Activated CD4-positive, alpha-beta T cell treated with anti-CD3 and anti-CD28 coated beads for 36 hours (primary cell): ENCODE measurements at regions of chr19 and their contacts with region 1.

Region 1: DNA sequence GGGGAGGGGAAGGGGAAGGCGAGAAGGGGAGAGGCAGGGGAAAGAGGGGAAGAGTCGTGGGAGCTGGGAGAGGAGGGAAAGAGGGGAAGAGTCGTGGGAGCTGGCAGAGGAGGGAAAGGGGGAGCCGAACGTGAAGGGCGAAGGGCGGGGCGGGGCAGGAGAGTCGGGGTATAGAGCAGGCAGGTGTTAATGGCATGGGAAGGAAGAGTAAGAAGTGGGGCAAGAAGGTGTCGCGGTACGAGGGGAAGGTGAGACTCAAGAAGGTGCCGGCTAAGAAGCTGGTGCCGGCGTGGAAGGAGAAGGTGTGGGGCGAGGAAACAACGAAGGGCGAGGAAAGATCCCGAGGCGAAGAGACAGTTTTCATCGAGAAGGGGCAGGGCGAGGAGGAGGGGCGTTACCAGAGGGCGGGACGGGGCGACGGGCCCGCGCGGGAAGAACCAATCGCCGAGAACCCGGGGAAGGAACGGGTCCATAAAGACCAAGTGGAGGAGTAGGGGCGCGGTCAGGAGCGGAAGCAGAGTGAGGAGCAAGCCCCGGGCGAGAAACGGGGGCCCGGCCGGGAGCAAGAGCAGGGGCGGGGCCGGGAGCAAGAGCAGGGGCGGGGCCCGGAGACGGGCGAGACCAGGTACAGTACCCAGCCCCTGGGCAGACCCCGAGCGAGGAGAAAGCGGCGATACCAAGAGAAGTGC is 463 bp downstream of the CATSPERG start:
- DNase-seq: peak; percentile 98
- ATAC-seq: peak; percentile 75
- H3K4me3 Mint-ChIP-seq: peak overlapping the region; percentile 82
- H3K27ac Mint-ChIP-seq: peak overlapping the region; percentile 98
- H3K4me1 Mint-ChIP-seq: peaks cover 12% of the 10 kb centered on the region
- H3K27me3 Mint-ChIP-seq: no peaks in the 10 kb centered on the region

Region 2: GRCh38 chr19:37906869-37907734 is 429.0 kb before region 1 on chr19 and contains the start of gene SIPA1L3:
- CTCF ChIA-PET with region 1: interaction called, 3 read pairs
- POLR2A ChIA-PET with region 1: interaction called, 3 read pairs
- intact Hi-C with region 1: loop called (anchors 1 kb)
- DNase-seq: peak; percentile 97
- ATAC-seq: peak; percentile 98
- H3K4me3 Mint-ChIP-seq: peak within 1 kb of the TSS; percentile 73
- H3K27ac Mint-ChIP-seq: peak within 1 kb of the TSS; percentile 74
- H3K4me1 Mint-ChIP-seq: peaks cover 20% of the 10 kb centered on the region
- H3K27me3 Mint-ChIP-seq: no peaks in the 10 kb centered on the region
- total RNA-seq, gene SIPA1L3: 10.5 to 18.3 TPM

Region 3: DNA sequence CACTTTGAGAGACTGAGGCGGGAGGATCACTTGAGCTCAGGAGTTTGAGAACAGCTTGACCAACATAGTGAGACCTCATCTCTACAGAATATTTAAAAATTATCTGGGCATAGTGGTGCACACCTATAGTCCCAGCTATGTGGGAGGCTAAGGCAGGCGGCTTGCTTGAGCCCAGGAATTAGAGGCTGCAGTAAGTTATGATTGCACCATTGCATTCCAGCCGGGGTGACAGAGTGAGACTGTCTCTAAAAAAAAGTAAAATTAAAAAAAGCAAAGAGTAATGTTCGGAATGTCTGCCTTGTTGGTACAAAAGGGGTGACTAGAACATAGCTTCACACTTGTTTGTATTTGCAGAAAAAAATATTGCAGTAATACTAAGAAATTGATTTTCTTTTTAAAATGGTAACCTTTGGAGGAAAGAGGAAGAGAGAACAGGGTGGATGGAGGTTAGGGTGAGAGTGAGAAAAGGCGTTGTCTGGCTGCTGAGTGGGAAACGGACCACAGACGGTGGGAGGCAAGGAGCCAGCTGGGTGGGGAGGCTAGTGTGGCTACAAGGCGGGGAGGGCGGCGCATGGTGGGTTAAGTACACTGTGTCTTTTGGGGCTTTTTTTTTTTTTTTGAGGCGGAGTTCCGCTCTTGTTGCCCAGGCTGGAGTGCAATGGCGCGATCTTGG is 90.1 kb before region 1 on chr19:
- CTCF ChIA-PET with region 1: interaction called, 13 read pairs
- POLR2A ChIA-PET with region 1: no interaction called
- intact Hi-C with region 1: loop called (anchors 1 kb)
- DNase-seq: no peak
- ATAC-seq: no peak
- H3K4me3 Mint-ChIP-seq: no peak overlapping the region
- H3K27ac Mint-ChIP-seq: no peak overlapping the region
- H3K4me1 Mint-ChIP-seq: peaks cover 3% of the 10 kb centered on the region
- H3K27me3 Mint-ChIP-seq: peaks cover 2% of the 10 kb centered on the region

Region 4: DNA sequence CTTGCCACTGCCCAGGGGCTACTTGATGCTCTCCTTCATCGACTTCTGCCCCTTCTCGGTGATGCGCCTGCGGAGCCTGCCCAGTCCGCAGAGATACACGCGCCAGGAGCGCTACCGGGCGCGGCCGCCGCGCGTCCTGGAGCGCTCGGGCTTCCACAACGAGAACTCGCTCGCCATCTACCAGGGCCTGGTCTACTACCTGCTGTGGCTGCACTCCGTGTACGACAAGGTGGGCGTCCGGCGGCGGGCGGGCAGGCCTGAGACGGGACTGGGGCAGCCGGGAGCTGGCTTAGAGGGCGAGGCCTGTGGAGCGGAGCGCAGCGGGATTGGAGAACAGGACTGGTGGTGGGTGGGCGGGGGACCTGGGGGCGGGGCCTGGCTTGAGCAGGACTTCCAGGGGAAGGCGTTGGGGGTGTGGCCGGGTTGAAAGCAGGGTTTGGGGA is 25.6 kb after region 1 on chr19:
- CTCF ChIA-PET with region 1: no interaction called
- POLR2A ChIA-PET with region 1: no interaction called
- intact Hi-C with region 1: loop called (anchors 1 kb)
- DNase-seq: peak; percentile 87
- ATAC-seq: peak; percentile 78
- H3K4me3 Mint-ChIP-seq: peak overlapping the region; percentile 76
- H3K27ac Mint-ChIP-seq: no peak overlapping the region
- H3K4me1 Mint-ChIP-seq: peaks cover 9% of the 10 kb centered on the region
- H3K27me3 Mint-ChIP-seq: peaks cover 22% of the 10 kb centered on the region

Region 5: DNA sequence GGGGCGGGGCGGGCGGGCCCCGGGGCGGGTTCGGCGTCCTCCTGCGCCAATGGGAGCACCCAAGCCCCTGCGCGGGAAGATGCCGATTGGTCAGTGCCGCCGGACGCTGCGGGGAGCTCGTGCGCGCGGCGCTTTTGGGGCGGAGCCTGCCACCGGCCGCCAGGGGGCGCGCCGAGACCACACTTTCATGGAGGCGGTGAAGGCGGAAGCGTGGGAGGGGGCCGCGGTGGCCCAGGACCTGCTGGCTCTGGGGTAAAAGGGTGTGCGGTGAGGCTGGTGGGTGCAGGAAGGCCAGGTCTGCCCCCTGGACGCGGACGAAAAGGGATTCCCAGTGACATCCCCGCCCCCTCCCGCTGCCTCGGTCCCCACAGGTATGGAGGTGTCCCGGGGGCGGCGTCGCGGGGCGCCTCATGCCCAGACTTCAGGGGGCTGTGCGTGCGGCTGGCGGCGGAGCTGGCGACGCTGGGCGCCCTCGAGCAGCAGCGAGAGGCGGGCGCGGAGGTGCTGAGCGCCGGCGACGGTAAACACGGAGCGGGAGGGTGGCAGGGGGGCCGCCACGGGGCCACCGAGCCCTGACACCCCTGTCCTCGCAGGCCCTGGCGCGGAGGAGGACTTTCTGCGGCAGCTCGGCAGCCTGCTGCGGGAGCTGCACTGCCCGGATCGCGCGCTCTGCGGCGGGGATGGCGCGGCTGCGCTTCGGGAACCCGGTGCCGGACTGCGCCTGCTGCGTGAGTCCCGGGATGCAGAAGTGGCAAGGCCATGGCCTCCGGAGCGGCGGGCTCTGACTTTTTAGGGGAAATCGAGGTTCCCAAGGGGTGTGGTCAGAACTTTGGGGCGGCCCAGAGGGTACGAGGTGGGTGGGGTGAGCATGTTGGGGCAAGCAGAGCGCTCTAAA is 67.1 kb after region 1 on chr19 and contains the start of gene FAM98C:
- CTCF ChIA-PET with region 1: interaction called, 3 read pairs
- POLR2A ChIA-PET with region 1: no interaction called
- intact Hi-C with region 1: loop called in 1 of 2 experiments (anchors 1 kb)
- DNase-seq: peak; percentile 99
- ATAC-seq: peak; percentile 99
- H3K4me3 Mint-ChIP-seq: peak within 1 kb of the TSS; percentile 84
- H3K27ac Mint-ChIP-seq: peak within 1 kb of the TSS; percentile 85
- H3K4me1 Mint-ChIP-seq: peaks cover 16% of the 10 kb centered on the region
- H3K27me3 Mint-ChIP-seq: no peaks in the 10 kb centered on the region
- total RNA-seq, gene FAM98C: 19.6 to 24.8 TPM

Region 6: DNA sequence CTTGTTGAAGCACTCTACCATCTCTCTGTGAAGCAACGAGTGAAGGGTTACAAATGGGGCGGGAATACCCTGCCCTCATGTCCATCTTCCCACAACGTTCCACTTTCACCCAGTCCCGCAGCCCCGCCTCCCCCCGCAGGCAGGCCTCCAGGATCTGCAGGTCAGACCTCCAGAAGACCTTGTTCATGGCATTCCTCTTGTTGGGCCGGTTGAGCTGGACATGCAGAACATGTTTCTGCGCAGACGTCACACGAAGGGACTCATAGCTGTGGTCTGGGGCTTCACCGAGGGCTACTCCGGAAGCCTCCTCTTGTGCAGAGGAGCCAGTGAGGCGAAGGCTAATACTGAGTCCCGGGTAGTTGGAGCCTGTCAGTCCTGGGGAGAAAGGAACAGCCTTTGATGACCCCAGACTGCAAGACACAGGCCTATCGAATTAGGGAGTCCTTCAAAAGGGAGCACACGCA is 495.1 kb after region 1 on chr19:
- CTCF ChIA-PET with region 1: no interaction called
- POLR2A ChIA-PET with region 1: no interaction called
- intact Hi-C with region 1: loop called in 1 of 2 experiments (anchors 1 kb)
- DNase-seq: peak; percentile 58
- ATAC-seq: peak; percentile 53
- H3K4me3 Mint-ChIP-seq: peak overlapping the region; percentile 87
- H3K27ac Mint-ChIP-seq: peak overlapping the region; percentile 83
- H3K4me1 Mint-ChIP-seq: peaks cover 25% of the 10 kb centered on the region
- H3K27me3 Mint-ChIP-seq: no peaks in the 10 kb centered on the region